Tibial artery (tissue), 4 donors: ENCODE measurements at regions of chr11 and their contacts with region 1.

Region 1: DNA sequence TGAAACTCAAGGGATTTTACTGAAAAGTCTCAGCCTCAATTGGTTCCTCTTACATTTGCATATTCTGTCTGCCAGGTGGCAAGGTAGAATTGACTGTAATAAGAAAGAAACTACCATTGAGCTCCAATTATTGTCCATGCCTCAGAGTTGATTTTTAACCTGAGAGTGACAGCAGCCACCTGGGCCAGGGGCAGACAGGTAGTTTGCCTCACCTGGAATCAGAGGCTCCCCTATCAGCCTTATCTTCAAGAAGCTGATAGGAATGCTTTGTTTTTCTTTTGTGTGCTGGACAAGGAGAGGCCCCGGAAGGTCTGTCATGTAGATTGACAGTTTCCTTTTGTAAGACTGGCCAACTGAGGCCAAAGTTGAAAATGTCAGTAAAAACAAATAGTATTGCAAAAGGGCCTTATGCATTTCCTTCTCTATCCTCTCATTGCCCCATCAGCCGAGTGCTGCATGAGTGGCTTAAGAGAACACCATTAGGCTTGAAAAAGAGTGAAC is 34.1 kb downstream of the CD44 start:
- DNase-seq: peak in 1 of 2 donors; percentile 73
- H3K4me3 ChIP-seq: no peak overlapping the region
- H3K27ac ChIP-seq: peak overlapping the region; percentile 46 to 59
- H3K4me1 ChIP-seq: peaks cover 0 to 77% (median 50%) of the 10 kb centered on the region in 4 donors
- H3K27me3 ChIP-seq: no peaks in the 10 kb centered on the region
- CTCF ChIP-seq: no peak

Region 2: GRCh38 chr11:34339149-34340064 is 833.7 kb before region 1 on chr11:
- intact Hi-C with region 1: loop called (anchors 10 kb)
- DNase-seq: no peak
- H3K4me3 ChIP-seq: no peak overlapping the region
- H3K27ac ChIP-seq: peak overlapping the region in 1 of 2 donors; percentile 90
- H3K4me1 ChIP-seq: peaks cover 0 to 53% (median 12%) of the 10 kb centered on the region in 4 donors
- H3K27me3 ChIP-seq: no peaks in the 10 kb centered on the region
- CTCF ChIP-seq: no peak

Region 3: DNA sequence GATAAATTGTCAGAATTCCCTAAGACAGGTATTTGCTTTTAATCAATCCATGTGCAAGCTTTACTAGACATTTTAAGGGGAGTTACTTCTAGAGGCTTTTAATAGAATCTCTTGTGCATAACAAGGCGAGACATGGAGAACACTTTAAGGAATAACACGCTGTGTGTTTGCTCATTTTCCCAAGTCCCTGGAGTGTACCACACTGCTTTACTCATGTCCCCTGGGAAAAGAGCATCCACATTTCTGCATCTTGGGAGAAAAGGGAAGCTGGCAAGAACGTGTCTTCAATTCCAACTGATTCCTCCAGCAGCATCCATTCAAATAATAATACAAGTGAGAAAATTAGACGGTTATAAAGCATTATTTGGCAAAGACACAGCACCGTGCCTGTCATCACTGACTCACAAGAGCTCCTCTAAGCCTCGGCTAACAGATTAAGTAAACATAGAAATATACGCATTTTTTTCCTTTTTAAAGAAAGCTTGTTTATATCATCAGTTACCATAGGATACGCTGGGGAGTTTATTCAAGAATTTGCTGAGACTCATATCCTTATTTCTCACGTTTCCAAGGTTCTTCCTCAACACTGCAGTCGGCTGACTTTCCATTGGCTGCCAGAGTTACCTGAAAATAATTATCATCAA is 87.4 kb after region 1 on chr11:
- intact Hi-C with region 1: loop called (anchors 10 kb)
- DNase-seq: no peak
- H3K4me3 ChIP-seq: peak overlapping the region; percentile 7 to 11
- H3K27ac ChIP-seq: peak overlapping the region; percentile 36 to 56
- H3K4me1 ChIP-seq: peaks cover 0 to 31% (median 8%) of the 10 kb centered on the region in 4 donors
- H3K27me3 ChIP-seq: no peaks in the 10 kb centered on the region
- CTCF ChIP-seq: no peak

Region 4: GRCh38 chr11:35419184-35419829 is 246.2 kb after region 1 on chr11 and contains the start of gene SLC1A2:
- intact Hi-C with region 1: no loop called
- DNase-seq: no peak
- H3K4me3 ChIP-seq: peak within 1 kb of the TSS; percentile 41 to 57
- H3K27ac ChIP-seq: no peak within 1 kb of the TSS
- H3K4me1 ChIP-seq: peaks cover 0 to 27% (median 22%) of the 10 kb centered on the region in 4 donors
- H3K27me3 ChIP-seq: peaks cover 0 to 65% of the 10 kb centered on the region in 2 donors
- CTCF ChIP-seq: no peak